Astrocyte of the spinal cord (primary cell): ENCODE measurements at regions of chr16 and their contacts with region 1.

Region 1: DNA sequence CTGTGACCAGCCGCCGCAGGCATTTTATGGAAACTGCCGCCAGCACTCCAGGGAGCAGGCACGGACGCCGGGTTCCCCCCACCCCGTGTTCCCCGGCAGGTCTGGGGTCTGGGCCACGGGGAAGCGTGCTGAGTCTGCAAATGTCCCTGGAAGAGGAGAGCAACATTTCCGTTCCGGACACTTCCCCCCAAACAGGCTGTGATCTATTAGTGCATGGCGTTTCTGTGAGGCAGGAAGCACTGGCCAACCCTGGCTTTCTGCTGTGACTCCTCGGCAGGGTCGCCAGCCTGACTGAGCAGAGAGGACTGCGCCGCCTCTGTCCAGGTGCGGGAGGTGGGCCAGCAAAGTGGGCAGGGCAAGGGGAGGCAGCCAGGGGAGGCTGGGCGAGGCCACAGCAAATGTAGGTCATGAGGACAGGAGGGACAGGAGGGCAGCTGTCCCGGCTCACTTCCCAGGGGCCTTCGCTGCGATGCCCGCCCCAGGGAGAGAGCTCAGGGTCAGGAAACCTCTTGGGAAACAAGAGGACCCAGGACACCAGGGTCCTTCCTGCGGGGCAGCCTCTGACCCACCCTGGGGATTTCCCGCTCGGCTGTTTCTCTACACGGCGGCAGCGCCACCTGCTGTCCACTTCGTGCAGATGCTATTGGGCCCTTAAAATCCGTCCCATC is 9.5 kb downstream of the FOXF1 start:
- DNase-seq: peak; percentile 53
- H3K4me3 ChIP-seq: no peak overlapping the region
- CTCF ChIP-seq: peak; percentile 90

Region 2: DNA sequence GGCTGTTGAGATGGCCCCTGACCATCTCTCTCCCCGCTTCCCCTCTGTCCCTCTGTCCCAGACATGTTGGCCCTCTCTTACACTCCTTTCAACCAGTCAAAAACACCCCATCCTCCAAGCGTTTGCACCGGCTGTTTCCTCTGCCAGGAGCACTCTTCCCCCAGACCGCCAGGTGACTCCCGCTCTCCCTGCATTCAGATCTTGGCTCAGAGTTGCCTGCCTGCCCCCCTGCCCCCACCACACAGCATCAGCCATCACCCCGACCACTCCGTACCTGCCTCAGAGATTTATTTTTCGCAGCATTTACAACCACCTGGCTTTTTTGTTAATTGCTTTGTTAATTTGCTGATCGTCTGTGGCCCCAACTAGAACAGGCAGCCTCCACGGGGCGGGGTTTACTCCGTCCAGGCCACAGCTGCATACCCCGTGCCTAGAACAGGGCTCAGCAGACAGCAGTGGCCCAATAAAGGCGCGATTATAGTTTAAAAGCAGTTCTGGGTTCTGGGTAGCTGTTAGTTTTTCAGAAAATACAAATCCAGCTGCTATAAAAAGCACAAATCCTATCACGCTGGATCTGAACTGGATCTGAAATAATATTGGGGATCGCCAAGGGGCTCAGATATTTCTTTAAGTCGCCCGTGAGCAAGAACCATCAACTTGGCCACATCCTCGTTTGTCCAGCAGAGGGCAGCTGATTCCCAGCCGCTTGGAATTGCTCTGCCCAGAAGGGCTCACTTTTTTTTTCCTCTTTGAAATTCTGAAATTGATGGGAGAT is 447.3 kb before region 1 on chr16:
- in situ Hi-C with region 1: loop called (anchors 5 kb)
- DNase-seq: peak; percentile 70
- H3K4me3 ChIP-seq: no peak overlapping the region
- CTCF ChIP-seq: peak; percentile 87

Region 3: DNA sequence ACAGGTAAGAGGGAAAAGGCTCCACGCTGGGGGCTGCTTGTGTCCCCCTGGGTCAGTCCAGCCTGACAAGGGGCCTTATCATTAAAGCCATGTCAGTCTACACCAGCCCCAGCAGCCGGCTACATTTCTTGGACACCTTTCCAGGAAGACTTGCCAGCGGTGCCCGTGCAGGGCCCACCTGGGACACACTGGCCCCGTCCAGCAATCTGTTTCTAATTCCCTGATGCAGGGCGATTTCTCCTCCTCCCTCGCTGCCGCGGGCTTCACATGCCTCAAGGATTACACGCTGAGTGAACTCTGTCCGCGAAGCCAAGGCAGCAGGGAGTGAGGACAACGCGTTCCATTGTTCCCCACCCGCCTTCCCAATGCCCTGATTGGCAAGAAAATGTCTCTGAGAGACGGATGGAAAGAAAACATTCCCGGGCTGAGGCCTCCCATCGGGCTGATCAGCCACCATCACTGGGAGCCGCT is 612.7 kb after region 1 on chr16:
- in situ Hi-C with region 1: no loop called
- DNase-seq: peak; percentile 89
- H3K4me3 ChIP-seq: no peak overlapping the region
- CTCF ChIP-seq: no peak